Activated CD4-positive, alpha-beta T cell treated with anti-CD3 and anti-CD28 coated beads, Interleukin-2, amount 10 ng/mL, durations not matched to agents 24 days and 14 days (primary cell): ENCODE measurements at regions of chr1 and their contacts with region 1.

Region 1: DNA sequence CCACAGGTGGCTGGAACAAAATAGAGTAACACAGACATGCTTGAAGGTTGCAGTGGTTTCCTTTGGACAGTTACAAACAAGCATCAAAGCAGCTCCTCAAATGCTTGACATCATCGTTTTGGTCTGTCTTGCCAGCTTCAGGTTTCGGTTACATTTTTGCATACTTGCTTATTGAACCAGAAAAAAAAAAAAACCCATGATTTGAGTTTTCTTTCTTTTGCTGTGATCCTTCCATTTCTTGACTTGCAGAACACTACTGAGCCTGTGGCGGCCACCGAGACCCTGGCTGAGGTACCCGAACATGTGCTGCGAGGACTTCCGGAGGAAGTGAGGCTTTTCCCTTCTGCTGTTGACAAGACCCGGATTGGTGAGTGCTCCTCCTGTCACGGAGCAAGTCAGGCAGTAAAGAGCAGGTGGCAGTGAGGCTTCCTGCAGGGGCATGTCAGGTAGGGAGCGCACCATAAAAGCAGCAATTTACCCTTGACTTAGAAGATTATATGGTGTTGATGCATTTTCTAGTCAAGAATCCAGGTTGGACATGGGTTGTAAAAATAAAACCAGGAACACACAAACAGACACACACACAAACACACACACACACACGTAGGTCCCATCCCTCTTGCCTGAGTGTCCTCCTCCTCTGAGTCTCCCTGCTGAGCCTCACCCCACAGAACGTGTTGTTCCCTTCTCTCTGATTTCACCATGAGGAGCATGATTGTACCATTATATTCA is 30.9 kb downstream of the PRDM2 start:
- DNase-seq: peak; percentile 95
- H3K4me3 Mint-ChIP-seq: peak overlapping the region; percentile 93
- H3K27ac Mint-ChIP-seq: peak overlapping the region; percentile 100
- H3K4me1 Mint-ChIP-seq: peaks cover 53% of the 10 kb centered on the region
- H3K27me3 Mint-ChIP-seq: no peaks in the 10 kb centered on the region

Region 2: DNA sequence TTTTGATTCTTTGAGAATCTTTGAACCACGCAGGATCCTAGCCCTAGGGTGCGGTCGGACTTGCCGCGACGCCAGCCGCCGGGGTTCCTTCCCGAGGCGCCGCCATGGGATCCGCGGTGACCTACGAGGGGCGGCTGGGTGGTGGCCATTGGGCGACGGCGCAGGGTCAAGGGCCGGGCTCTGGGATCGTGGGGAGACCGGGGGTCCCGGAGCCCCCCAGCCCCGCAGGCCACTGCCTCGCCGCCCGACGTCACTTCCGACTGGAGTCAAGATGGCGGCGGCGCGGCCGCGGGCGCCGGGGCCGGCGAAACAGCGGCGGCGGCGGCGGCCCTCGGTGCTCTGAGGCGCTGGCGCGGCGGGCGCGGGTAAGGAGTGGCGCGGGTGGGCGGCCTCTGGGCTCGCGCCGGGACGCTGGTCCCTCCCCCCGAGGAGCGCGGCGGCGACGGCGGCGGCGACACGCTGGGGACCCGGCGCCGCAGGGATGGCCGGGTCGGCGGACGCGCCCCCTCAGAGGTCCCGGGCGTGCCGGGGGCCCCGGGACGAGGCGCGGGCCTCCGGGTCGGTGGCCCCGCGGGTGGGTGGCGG is 30.9 kb before region 1 on chr1 and contains the start of gene PRDM2:
- intact Hi-C with region 1: loop called (anchors 1 kb)
- DNase-seq: peak; percentile 90
- H3K4me3 Mint-ChIP-seq: peak within 1 kb of the TSS; percentile 87
- H3K27ac Mint-ChIP-seq: peak within 1 kb of the TSS; percentile 91
- H3K4me1 Mint-ChIP-seq: peaks cover 34% of the 10 kb centered on the region
- H3K27me3 Mint-ChIP-seq: peaks cover 2% of the 10 kb centered on the region
- total RNA-seq, gene PRDM2: 44.5 and 45.9 TPM in 2 replicates